PC-9 (cell line): ENCODE measurements at regions of chr17 and their contacts with region 1.

Region 1: DNA sequence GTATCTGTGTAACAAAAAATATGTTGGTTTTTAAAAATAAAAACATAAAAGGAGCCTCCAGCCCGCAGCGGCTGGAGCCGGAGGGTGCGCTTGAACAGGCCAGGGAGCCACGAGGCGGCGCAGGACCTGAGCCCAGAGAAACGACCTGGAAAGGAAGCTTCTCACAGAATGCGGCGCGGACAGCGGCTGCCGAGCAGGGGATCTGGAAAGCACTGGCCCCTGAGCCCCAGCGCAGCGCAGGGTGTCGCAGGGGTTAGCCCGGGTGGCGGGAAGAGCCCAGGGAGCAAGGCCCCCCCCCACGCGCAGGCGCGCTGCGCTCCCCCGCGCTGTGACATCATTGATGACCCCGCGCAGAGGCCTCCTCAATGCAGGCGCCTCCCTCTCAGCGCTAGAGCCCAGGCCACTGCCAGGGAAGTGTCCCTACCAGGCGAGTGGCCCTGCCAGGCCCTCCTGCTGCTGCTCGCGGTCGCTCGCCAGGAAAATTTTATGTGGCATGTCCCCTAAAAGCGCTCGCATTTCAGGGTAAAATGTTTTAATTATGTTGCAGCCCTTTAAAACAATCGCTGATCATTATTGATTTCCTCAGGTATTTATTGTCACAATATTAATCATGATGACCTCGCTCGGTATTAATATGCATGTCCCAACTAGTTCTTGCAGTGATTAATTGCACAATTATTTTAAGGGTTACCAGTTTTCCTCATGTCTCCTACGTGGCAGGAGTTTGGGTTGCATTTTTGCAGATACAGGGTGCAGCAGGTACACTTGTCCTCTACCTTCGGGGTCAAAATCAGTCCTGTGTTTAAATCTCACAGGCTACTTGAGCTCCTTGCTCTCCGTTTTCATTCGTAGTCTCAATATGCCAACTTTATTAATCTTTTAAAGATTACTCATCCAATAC is 134.2 kb downstream of the USP22 start:
- DNase-seq: peak; percentile 72 to 92
- H3K4me3 ChIP-seq: peak overlapping the region; percentile 51
- H3K27ac ChIP-seq: peak overlapping the region; percentile 57
- H3K4me1 ChIP-seq: peaks cover 16% of the 10 kb centered on the region
- H3K27me3 ChIP-seq: no peaks in the 10 kb centered on the region
- CTCF ChIP-seq: peak; percentile 58

Region 2: DNA sequence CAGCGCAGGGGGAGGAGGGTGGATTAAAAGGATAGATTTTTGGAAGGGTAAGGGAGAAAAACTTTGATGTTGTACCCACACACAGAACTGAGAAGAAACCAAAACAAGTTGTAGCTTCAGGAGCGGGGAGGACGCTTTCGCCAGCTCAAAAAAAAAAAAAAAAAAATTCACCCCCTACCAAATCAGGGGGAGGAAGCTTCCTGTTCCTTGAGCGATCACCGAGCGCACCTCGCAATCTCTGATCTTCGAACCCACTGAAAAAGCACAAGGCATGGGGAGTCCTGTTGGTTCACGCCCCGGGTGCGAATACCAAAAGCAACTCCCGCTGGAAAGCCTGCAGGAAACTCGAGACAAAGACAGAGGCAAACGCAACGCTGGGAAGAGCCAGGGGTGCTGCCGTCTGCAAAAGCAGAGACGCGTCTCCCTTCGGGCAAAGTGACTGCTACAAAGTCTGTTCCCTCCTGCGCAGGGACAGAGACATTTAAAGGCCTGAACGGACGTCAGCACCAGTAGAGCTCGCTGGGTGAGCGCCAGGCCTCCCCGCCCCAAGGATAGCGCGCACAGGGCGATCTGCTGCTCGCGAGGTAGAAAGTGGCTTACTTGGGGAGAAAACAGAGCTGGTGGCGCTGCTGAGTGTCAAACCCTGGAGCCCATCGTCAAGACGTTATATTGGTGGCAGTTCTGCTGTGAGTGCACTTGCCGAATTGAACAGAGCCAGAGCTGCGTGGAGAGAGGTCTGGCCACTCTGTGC is 56.2 kb before region 1 on chr17:
- CTCF ChIA-PET with region 1: no interaction called
- POLR2A ChIA-PET with region 1: no interaction called
- intact Hi-C with region 1: loop called (anchors 2 kb)
- DNase-seq: peak; percentile 42 to 61
- H3K4me3 ChIP-seq: peak overlapping the region; percentile 63
- H3K27ac ChIP-seq: no peak overlapping the region
- H3K4me1 ChIP-seq: peaks cover 8% of the 10 kb centered on the region; the same call in 1 of the 2 replicates
- H3K27me3 ChIP-seq: no peaks in the 10 kb centered on the region
- CTCF ChIP-seq: no peak

Region 3: GRCh38 chr17:20890338-20890737 is 18.3 kb before region 1 on chr17:
- CTCF ChIA-PET with region 1: no interaction called
- POLR2A ChIA-PET with region 1: no interaction called
- intact Hi-C with region 1: no loop called
- DNase-seq: no peak
- H3K4me3 ChIP-seq: no peak overlapping the region
- H3K27ac ChIP-seq: no peak overlapping the region
- H3K4me1 ChIP-seq: no peaks in the 10 kb centered on the region
- H3K27me3 ChIP-seq: no peaks in the 10 kb centered on the region
- CTCF ChIP-seq: no peak

Region 4: GRCh38 chr17:20926532-20926931 is 17.9 kb after region 1 on chr17:
- CTCF ChIA-PET with region 1: no interaction called
- POLR2A ChIA-PET with region 1: no interaction called
- intact Hi-C with region 1: no loop called
- DNase-seq: peak in 1 of 2 experiments; percentile 66
- H3K4me3 ChIP-seq: no peak overlapping the region
- H3K27ac ChIP-seq: no peak overlapping the region
- H3K4me1 ChIP-seq: peaks cover 14% of the 10 kb centered on the region
- H3K27me3 ChIP-seq: no peaks in the 10 kb centered on the region
- CTCF ChIP-seq: no peak

Region 5: GRCh38 chr17:20955427-20956323 is 47.1 kb after region 1 on chr17:
- CTCF ChIA-PET with region 1: no interaction called
- POLR2A ChIA-PET with region 1: no interaction called
- intact Hi-C with region 1: no loop called
- DNase-seq: peak in 1 of 2 experiments; percentile 64
- H3K4me3 ChIP-seq: no peak overlapping the region
- H3K27ac ChIP-seq: no peak overlapping the region
- H3K4me1 ChIP-seq: peaks cover 7% of the 10 kb centered on the region; the same call in 1 of the 2 replicates
- H3K27me3 ChIP-seq: peaks cover 13% of the 10 kb centered on the region
- CTCF ChIP-seq: no peak